HCT116 (cell line): ENCODE measurements at regions of chr7 and their contacts with region 1.

Region 1: DNA sequence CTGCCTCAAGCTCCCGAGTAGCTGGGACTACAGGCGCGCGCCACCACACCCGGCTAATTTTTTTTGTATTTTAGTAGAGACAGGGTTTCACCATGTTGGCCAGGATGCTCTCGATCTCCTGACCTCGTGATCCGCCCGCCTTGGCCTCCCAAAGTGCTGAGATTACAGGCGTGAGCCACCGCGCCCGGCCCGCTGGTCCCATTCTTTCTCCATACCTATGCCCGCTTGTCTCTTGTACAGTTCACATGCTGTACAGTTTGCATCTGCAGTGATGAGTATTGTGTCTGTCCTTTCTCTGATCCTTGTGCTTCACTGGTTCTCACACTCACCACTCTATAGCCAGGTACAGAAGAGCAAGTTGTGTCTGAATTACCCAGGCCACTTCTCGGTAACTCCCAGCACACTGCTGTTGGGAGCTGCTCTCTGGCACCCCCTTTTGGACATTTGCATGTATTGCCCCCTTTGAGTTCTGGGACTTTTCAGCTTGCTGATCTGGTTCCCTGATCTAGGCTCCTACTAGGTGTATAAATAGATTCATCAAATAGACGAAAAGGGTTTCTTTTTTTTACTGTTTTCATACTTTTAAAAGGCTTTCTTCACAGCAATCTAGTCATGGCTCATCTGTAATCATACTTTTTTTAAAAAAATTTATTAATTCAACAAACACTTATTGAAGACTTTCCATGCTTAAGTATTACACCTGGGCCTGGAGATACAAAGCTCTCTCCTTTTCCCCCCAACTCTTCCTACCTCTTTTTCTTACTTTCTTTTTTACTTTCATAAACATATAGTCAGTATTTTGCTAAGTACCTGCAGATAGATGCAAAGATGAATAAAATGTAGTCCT is 53.5 kb downstream of the AOAH start:
- DNase-seq: peak; percentile 60
- ATAC-seq: peak; percentile 92
- H3K4me3 ChIP-seq: no peak overlapping the region
- H3K27ac ChIP-seq: no peak overlapping the region
- H3K4me1 ChIP-seq: peaks cover 5 to 21% of the 10 kb centered on the region in 2 experiments
- H3K27me3 ChIP-seq: no peaks in the 10 kb centered on the region
- CTCF ChIP-seq: peak; percentile 75 to 96 (median 91)
- POLR2A ChIP-seq: no peak
- RAD21 ChIP-seq: peak; percentile 84

Region 2: GRCh38 chr7:36683695-36684357 is 13.0 kb after region 1 on chr7:
- CTCF ChIA-PET with region 1: interaction called, 17 read pairs
- POLR2A ChIA-PET with region 1: interaction called, 4 read pairs
- RAD21 ChIA-PET with region 1: no interaction called
- intact Hi-C with region 1: no loop called
- DNase-seq: no peak
- ATAC-seq: no peak
- H3K4me3 ChIP-seq: no peak overlapping the region
- H3K27ac ChIP-seq: no peak overlapping the region
- H3K4me1 ChIP-seq: peaks cover 0 to 9% of the 10 kb centered on the region in 2 experiments; a peak in 2 of 4 replicates
- H3K27me3 ChIP-seq: no peaks in the 10 kb centered on the region
- CTCF ChIP-seq: no peak
- POLR2A ChIP-seq: no peak
- RAD21 ChIP-seq: no peak